Activated CD4-positive, alpha-beta T cell treated with anti-CD3 and anti-CD28 coated beads for 36 hours (primary cell): ENCODE measurements at regions of chr2 and their contacts with region 1.

Region 1: DNA sequence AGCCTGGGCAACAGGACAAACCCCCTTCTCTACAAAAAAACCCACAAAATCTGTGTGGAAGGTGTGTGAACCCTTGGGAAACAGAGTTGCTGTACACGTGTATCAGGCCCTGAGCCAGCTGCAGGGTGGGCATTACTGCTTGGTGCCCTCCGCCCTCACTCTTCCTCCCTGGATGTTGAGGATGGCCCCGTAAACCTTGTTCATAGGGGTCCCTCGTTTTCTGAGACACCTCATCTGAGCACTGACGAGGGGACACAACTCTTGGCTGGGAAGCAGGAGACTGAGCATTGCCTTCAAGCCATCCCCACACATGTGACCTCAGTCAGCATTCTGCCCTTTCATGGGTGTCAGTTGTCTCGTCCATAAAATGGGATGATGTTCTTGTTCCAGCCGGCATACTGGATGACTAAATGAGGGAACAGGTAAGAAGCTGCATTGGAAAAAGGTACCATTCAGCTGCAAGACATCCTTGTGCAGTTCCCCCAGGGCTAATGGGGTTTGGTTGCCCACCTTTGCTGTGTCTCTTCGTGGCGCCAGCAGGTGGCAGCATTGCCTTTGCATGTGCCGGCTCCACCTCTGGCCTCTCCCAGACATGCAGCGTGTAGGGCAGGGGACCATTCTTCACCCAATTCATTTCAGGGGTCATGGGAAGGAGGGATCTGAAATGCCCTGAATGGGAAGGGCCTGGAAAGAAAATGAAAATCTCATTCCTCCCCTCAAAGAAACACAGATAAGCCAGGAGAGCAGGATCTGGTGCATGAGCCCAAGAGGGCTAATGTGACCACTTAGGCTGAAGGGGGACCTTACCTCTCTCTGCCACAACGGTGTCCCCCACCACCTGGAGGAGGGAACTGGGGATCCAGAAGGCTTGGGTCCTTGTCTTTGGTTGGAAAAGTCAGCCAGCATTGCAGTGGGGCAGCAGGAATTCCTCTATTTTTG is 36.4 kb upstream of the HAAO start:
- DNase-seq: peak; percentile 84
- ATAC-seq: peak; percentile 92
- H3K4me3 Mint-ChIP-seq: no peak overlapping the region
- H3K27ac Mint-ChIP-seq: no peak overlapping the region
- H3K4me1 Mint-ChIP-seq: peaks cover 10% of the 10 kb centered on the region
- H3K27me3 Mint-ChIP-seq: no peaks in the 10 kb centered on the region

Region 2: DNA sequence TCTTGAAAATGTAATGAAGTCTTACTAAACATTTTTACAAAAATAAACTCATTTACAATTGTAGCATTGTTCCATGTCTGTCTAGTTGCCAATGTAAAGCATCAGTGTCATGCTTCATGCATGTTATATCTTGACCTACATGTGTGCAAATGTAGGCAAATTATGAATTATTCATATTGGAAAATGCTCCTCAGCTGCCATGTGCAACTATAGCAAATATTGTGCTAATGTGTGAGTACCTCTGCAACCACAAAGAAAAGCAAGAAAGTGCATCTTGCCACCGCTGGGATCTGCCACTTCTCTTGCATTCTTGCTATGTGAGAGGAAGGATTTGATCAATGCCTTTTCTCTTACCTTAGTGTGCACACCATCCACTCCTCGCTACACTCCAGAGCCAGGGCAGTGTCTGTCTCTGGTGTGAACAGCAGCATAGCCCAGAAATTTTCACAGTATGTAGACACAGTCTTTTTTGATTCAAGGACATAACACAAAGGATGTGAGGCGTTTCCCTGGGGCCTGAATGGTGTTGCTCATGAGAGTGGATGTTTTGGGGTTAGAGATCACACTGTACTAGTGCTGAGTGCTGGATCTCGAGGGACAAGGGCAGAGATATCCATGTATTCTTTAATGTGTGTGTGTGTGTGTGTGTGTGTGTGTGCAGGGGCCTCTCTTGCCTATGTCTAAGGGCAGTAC is 11.2 kb after region 1 on chr2:
- CTCF ChIA-PET with region 1: interaction called, 26 read pairs
- POLR2A ChIA-PET with region 1: no interaction called
- intact Hi-C with region 1: no loop called
- DNase-seq: no peak
- ATAC-seq: no peak
- H3K4me3 Mint-ChIP-seq: no peak overlapping the region
- H3K27ac Mint-ChIP-seq: no peak overlapping the region
- H3K4me1 Mint-ChIP-seq: no peaks in the 10 kb centered on the region
- H3K27me3 Mint-ChIP-seq: no peaks in the 10 kb centered on the region

Region 3: GRCh38 chr2:43542285-43542937 is 713.7 kb after region 1 on chr2:
- CTCF ChIA-PET with region 1: interaction called, 5 read pairs
- POLR2A ChIA-PET with region 1: no interaction called
- intact Hi-C with region 1: loop called in 1 of 2 experiments (anchors 1 kb)
- DNase-seq: no peak
- ATAC-seq: peak; percentile 60
- H3K4me3 Mint-ChIP-seq: no peak overlapping the region
- H3K27ac Mint-ChIP-seq: no peak overlapping the region
- H3K4me1 Mint-ChIP-seq: peaks cover 15% of the 10 kb centered on the region
- H3K27me3 Mint-ChIP-seq: no peaks in the 10 kb centered on the region